ENCODE measurements at regions of chr4 and their contacts with region 1.

Region 1: GRCh38 chr4:2761035-2761923 is 5.1 kb upstream of the TNIP2 start:
- DNase-seq: peak in 1 of 5 donors; percentile 28
- H3K4me3 ChIP-seq: no peak overlapping the region
- H3K27ac ChIP-seq: no peak overlapping the region
- H3K4me1 ChIP-seq: peaks cover 3% of the 10 kb centered on the region
- H3K27me3 ChIP-seq: no peaks in the 10 kb centered on the region
- CTCF ChIP-seq: no peak
- EP300 ChIP-seq: no peak
- POLR2A ChIP-seq: no peak

Region 2: DNA sequence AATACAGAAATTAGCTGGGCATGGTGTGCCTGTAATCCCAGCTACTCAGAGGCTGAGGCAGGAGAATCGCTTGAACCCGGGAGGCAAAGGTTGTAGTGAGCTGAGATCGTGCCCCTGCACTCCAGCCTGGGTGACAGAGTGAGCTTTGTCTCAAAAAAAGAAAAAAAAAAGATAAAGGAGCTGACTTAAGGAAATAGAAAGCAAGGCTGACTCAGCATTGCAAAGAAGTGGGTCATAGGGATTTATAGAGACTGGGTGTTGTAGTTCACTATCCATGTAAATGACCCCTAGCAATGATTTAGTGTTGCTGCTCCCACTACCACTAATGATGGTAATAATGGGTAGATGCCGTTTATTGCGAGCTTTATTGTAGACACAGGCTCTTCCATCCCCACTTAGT is 130.0 kb after region 1 on chr4:
- intact Hi-C with region 1: no loop called
- DNase-seq: no peak
- H3K4me3 ChIP-seq: no peak overlapping the region
- H3K27ac ChIP-seq: no peak overlapping the region
- H3K4me1 ChIP-seq: peaks cover 2% of the 10 kb centered on the region
- H3K27me3 ChIP-seq: no peaks in the 10 kb centered on the region
- CTCF ChIP-seq: no peak
- EP300 ChIP-seq: no peak
- POLR2A ChIP-seq: no peak

Region 3: GRCh38 chr4:2934813-2935761 is 173.8 kb after region 1 on chr4:
- intact Hi-C with region 1: loop called in 3 of 4 experiments (anchors 5 to 10 kb)
- DNase-seq: peak; percentile 96 to 99 (median 98)
- H3K4me3 ChIP-seq: peak overlapping the region; percentile 96
- H3K27ac ChIP-seq: peak overlapping the region; percentile 32 to 78
- H3K4me1 ChIP-seq: peaks cover 8% of the 10 kb centered on the region
- H3K27me3 ChIP-seq: no peaks in the 10 kb centered on the region
- CTCF ChIP-seq: no peak
- EP300 ChIP-seq: no peak
- POLR2A ChIP-seq: peak; percentile 93

Region 4: GRCh38 chr4:3031357-3032082 is 270.2 kb after region 1 on chr4:
- intact Hi-C with region 1: loop called in 2 of 4 experiments (anchors 2 to 5 kb)
- DNase-seq: no peak
- H3K4me3 ChIP-seq: no peak overlapping the region
- H3K27ac ChIP-seq: no peak overlapping the region
- H3K4me1 ChIP-seq: no peaks in the 10 kb centered on the region
- H3K27me3 ChIP-seq: no peaks in the 10 kb centered on the region
- CTCF ChIP-seq: no peak
- EP300 ChIP-seq: no peak
- POLR2A ChIP-seq: no peak

Region 5: GRCh38 chr4:3037957-3038461 is 276.7 kb after region 1 on chr4:
- intact Hi-C with region 1: loop called in 2 of 4 experiments (anchors 2 to 5 kb)
- DNase-seq: peak; percentile 43 to 73 (median 53)
- H3K4me3 ChIP-seq: peak overlapping the region; percentile 6
- H3K27ac ChIP-seq: no peak overlapping the region
- H3K4me1 ChIP-seq: peaks cover 7% of the 10 kb centered on the region
- H3K27me3 ChIP-seq: no peaks in the 10 kb centered on the region
- CTCF ChIP-seq: no peak
- EP300 ChIP-seq: no peak
- POLR2A ChIP-seq: no peak

Measured in ovary (tissue), 10 donors.